Activated CD4-positive, alpha-beta memory T cell treated with anti-CD3 and anti-CD28 coated beads for 36 hours (primary cell): ENCODE measurements at regions of chr6 and their contacts with region 1.

Region 1: GRCh38 chr6:21438237-21438985 is 155.1 kb upstream of the SOX4 start:
- DNase-seq: peak; percentile 73
- H3K4me3 Mint-ChIP-seq: peak overlapping the region; percentile 11
- H3K27ac Mint-ChIP-seq: peak overlapping the region; percentile 66
- H3K4me1 Mint-ChIP-seq: peaks cover 14% of the 10 kb centered on the region
- H3K27me3 Mint-ChIP-seq: peaks cover 6% of the 10 kb centered on the region

Region 2: DNA sequence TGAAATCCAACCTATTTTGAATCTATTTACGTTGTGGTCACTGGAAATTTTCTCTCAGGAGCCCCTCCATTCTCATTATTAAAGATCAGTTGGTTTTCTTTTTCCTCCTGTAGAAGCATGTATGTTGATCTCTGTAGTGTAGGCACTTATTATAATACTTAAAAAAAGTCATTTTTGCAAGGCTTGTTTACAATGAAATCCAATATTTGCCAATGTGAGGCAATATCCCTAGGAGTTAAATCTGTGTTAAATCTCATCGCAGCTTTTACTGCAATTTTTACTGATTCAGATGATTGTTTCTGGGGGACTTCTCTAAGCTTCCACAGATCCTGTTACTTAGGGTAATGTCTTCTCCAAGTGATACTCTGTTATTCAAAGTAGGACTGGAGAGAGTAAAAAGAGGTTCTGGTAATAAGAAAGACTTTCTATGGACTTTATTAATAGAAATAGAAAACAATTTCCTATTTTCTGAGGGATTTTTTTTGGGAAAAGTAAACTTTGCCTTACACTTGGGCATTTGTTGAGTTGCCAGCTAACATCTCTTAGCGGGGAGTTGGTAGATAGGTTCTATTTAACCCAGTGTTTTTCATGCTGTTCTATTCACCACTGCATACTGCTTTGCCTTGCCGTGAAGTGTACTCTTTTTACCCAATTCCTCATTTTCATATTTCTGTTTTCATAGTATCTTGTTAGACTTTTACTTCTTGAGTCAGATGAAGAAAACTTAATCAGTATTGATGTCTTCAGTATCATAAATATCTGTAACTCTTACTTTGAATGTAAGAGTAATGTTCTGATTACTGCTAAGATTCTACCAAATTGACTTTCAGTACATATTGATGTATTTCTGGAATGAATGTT is 855.6 kb before region 1 on chr6:
- CTCF ChIA-PET with region 1: no interaction called
- POLR2A ChIA-PET with region 1: no interaction called
- intact Hi-C with region 1: loop called (anchors 2 kb)
- DNase-seq: no peak
- H3K4me3 Mint-ChIP-seq: no peak overlapping the region
- H3K27ac Mint-ChIP-seq: no peak overlapping the region
- H3K4me1 Mint-ChIP-seq: peaks cover 28% of the 10 kb centered on the region
- H3K27me3 Mint-ChIP-seq: no peaks in the 10 kb centered on the region

Region 3: GRCh38 chr6:20877008-20877937 is 561.1 kb before region 1 on chr6:
- CTCF ChIA-PET with region 1: no interaction called
- POLR2A ChIA-PET with region 1: no interaction called
- intact Hi-C with region 1: loop called (anchors 1 kb)
- DNase-seq: peak; percentile 65
- H3K4me3 Mint-ChIP-seq: no peak overlapping the region
- H3K27ac Mint-ChIP-seq: peak overlapping the region; percentile 65
- H3K4me1 Mint-ChIP-seq: peaks cover 18% of the 10 kb centered on the region
- H3K27me3 Mint-ChIP-seq: no peaks in the 10 kb centered on the region

Region 4: DNA sequence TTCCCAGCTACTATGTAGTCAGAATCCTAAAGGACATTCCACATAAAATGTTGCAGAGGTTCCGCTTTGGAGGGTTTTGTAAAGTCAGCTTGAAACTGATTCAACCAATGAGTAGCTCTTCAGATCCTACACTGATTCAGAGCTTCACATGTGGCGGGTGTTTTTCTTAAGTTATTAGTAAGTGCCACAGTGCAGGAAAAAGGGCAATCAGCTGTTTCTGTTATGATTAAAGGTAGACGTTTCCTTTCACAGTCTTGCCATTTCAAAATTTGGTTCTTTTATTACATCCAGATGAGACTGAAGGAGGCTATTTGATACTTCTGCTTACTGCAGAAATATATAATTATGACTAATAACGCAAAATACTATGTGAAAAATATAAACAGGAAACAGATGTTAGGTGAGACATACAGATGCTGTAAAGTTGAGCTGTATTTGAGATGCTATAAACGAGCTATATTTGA is 460.2 kb before region 1 on chr6:
- CTCF ChIA-PET with region 1: no interaction called
- POLR2A ChIA-PET with region 1: no interaction called
- intact Hi-C with region 1: loop called (anchors 1 kb)
- DNase-seq: peak; percentile 15
- H3K4me3 Mint-ChIP-seq: no peak overlapping the region
- H3K27ac Mint-ChIP-seq: no peak overlapping the region
- H3K4me1 Mint-ChIP-seq: peaks cover 12% of the 10 kb centered on the region
- H3K27me3 Mint-ChIP-seq: no peaks in the 10 kb centered on the region

Region 5: GRCh38 chr6:21263531-21264287 is 174.7 kb before region 1 on chr6:
- CTCF ChIA-PET with region 1: no interaction called
- POLR2A ChIA-PET with region 1: no interaction called
- intact Hi-C with region 1: loop called (anchors 1 kb)
- DNase-seq: peak; percentile 34
- H3K4me3 Mint-ChIP-seq: no peak overlapping the region
- H3K27ac Mint-ChIP-seq: no peak overlapping the region
- H3K4me1 Mint-ChIP-seq: peaks cover 22% of the 10 kb centered on the region
- H3K27me3 Mint-ChIP-seq: peaks cover 5% of the 10 kb centered on the region